GM18951 (cell line): ENCODE measurements at regions of chr2 and their contacts with region 1.

Region 1: DNA sequence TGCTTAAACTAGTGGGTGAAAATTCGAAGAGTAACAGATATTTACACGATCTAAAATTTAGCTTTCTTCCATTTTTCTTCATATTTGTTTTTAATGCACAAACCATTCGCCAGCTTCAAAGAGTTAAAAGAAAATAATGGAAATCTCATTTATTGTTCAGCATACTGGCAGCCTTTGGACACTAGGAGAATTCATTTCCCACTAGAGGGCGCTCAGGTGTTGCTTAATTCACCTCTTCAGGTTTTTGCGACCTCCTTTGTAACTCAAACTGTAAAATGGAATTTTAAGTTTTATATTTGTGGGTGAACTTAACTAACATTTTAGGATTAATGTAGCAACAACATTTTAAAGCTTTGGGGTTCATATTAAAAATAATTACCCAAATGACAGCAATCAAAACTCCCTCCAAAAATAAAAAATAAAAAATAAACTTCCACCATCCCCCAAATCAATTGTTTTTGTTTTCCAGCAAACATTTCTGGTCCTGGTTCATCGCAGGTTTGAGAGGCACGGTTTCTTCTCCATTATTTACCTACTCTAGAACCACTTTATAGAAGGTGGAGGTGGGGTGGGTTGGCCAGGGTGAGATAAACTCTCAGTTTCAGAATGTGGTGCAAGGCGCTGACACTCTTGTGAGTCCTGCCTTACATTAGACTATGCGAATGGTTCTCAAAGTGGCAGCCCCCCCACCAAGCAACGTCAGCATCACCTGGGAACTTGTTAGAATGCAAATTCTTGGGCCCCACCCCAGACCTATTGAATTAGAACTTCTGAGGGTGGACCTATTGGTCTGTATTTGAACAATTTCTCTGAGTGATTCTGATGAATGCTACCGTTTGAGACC is 24.7 kb upstream of the PNPT1 start:
- POLR2A ChIP-seq: no peak

Region 2: DNA sequence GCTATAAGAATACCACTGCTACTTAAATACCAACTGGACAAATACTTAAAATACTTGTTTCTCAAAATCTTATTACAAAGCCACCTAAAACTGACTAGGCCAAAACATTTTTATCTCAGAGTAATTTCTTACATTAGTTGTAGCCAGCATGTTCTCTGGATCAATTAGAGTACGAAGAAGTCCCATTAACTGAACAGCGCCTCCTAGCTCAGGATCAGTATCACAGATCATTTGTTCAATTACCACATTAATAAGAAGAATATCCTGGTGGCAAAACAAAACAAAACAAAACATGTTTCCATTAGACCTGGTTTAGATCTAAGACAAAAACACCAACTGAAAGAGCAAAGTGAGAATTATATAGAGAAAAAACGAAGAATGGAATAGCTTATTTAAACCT is 137.0 kb before region 1 on chr2:
- in situ Hi-C with region 1: no loop called
- POLR2A ChIP-seq: no peak

Region 3: DNA sequence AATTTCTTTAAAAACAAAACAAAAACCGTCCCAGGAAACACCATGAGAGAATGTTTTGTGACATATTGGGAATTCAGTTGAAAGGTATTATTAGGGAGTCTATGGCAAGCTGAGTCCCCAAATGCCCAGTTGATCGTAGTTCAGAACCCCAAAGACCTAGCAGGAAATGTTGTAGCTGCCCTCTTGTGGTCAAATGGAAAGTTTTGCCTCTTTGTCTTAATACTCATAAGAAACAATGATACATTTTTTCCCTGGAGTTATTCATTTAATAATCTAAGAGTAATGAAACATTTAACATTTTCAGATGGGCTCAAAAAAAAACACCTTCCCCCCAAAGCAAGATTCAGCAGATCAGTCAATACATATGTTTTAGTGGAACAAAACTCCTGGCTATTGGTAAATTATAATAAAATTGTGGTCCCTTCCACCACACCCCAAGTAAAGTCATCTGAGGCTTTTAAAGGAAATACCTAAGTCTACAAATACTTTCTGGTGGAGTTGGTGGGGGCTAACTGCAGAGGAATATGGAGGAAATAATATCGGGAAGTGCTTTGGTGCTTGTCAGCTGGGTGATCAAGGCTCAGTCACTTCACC is 243.0 kb after region 1 on chr2:
- in situ Hi-C with region 1: loop called (anchors 25 kb)
- POLR2A ChIP-seq: no peak

Region 4: DNA sequence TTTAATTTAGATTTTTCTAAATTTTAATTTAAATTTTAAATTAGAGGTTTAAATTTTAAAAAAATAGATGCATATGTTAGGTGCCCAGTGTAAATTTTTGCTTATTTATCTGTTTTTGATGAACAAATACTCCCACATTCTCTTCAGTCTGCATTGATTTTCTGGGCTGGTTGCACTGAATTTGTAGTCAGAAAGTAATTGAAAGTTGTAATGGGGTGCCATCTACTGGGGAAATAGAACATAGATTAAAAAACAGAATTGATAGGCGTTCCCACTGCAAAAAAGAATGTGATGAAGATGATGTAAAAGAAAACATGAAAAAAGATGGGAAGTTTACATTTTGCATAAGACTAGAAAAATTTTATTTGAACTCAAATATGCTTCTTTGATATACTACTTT is 413.8 kb after region 1 on chr2:
- in situ Hi-C with region 1: loop called (anchors 25 kb)
- POLR2A ChIP-seq: no peak

Region 5: DNA sequence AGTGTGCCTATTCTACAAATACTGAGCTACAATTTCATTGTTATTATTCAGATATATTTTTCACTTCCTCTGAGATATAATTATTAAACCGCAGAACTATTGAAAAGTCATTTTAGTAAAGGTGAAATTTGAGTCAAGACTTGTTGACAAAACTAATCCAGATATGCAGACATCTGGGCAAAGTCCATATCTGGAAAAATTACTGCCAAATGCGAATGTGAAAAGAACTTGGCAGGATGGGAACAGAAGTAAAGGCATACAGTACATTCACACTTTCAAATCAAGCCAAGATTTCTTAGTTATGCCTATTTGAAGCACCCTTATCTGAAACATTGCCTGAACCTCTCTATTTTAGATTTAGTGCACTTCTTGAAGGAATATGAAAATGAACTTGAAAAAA is 1389.0 kb after region 1 on chr2:
- in situ Hi-C with region 1: no loop called
- POLR2A ChIP-seq: no peak